Naive thymus-derived CD4-positive, alpha-beta T cell (primary cell): ENCODE measurements at regions of chr17 and their contacts with region 1.

Region 1: GRCh38 chr17:2336215-2336851 is at the start of gene TSR1:
- DNase-seq: peak; percentile 78 to 91 (median 89)
- ATAC-seq: peak; percentile 91
- H3K4me3 ChIP-seq: peak within 1 kb of the TSS; percentile 99
- H3K4me3 Mint-ChIP-seq: peak within 1 kb of the TSS; percentile 97 to 99 (median 98)
- H3K27ac ChIP-seq: peak within 1 kb of the TSS; percentile 92
- H3K27ac Mint-ChIP-seq: peak within 1 kb of the TSS; percentile 88 to 98 (median 95)
- H3K4me1 ChIP-seq: peaks cover 10 to 13% of the 10 kb centered on the region in 2 donors
- H3K4me1 Mint-ChIP-seq: peaks cover 8 to 35% (median 28%) of the 10 kb centered on the region in 7 donors
- H3K27me3 ChIP-seq: no peaks in the 10 kb centered on the region
- H3K27me3 Mint-ChIP-seq: no peaks in the 10 kb centered on the region
- total RNA-seq, gene TSR1: 22.9 to 42.8 (median 30.0) TPM

Region 2: DNA sequence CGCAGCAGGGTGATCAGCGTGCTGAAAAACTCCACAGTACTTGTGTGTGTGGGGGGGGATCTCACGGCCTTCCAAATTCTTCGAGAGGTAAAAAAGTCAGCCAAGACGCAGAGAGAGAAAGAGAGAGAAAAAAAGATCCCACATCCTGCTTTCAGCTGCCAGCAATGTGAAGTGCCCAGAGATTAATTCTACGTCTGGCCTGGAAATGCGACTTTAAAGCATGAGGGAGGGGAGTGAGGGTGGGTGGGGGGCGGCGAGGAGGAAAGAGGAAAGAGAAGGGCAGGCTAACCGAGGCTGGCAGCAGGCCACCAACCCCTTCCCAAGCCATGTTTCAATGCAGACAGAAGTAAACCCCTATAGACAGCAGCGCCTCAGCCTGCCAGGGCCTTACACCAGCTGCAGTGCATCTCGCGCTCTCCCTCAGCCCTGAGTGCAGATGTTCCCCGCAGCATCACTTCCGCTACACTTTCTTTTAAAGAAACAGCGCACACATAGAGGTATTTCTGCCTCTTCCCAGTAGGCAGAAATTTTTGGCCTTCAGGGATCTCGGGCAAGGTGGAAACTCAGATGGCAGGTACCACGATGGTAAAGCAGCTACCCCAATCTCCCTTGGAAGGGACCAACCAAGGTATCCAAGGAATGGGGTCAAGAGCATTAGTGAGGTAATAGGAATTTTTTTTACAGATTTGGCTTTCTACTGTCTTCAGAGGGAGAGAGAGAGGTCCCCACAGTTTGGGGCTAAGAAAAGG is 120.5 kb before region 1 on chr17:
- CTCF ChIA-PET with region 1: no interaction called
- POLR2A ChIA-PET with region 1: no interaction called
- intact Hi-C with region 1: loop called in 1 of 2 experiments (anchors 5 kb)
- DNase-seq: peak; percentile 43 to 81 (median 77)
- ATAC-seq: peak; percentile 98
- H3K4me3 ChIP-seq: peak overlapping the region; percentile 40
- H3K4me3 Mint-ChIP-seq: peak overlapping the region; percentile 74 to 89 (median 80)
- H3K27ac ChIP-seq: peak overlapping the region; percentile 89
- H3K27ac Mint-ChIP-seq: peak overlapping the region; percentile 94 to 98 (median 97)
- H3K4me1 ChIP-seq: peaks cover 34 to 53% of the 10 kb centered on the region in 2 donors
- H3K4me1 Mint-ChIP-seq: peaks cover 27 to 70% (median 64%) of the 10 kb centered on the region in 7 donors
- H3K27me3 ChIP-seq: no peaks in the 10 kb centered on the region
- H3K27me3 Mint-ChIP-seq: no peaks in the 10 kb centered on the region

Region 3: GRCh38 chr17:2238432-2239169 is 97.7 kb before region 1 on chr17:
- CTCF ChIA-PET with region 1: no interaction called
- POLR2A ChIA-PET with region 1: no interaction called
- intact Hi-C with region 1: no loop called
- DNase-seq: no peak
- ATAC-seq: no peak
- H3K4me3 ChIP-seq: no peak overlapping the region
- H3K4me3 Mint-ChIP-seq: peak overlapping the region in 1 of 10 donors; percentile 72
- H3K27ac ChIP-seq: no peak overlapping the region
- H3K27ac Mint-ChIP-seq: peak overlapping the region in 3 of 9 donors; percentile 8 to 79 (median 34)
- H3K4me1 ChIP-seq: no peaks in the 10 kb centered on the region
- H3K4me1 Mint-ChIP-seq: peaks cover 0 to 64% (median 12%) of the 10 kb centered on the region in 7 donors
- H3K27me3 ChIP-seq: no peaks in the 10 kb centered on the region
- H3K27me3 Mint-ChIP-seq: no peaks in the 10 kb centered on the region

Region 4: DNA sequence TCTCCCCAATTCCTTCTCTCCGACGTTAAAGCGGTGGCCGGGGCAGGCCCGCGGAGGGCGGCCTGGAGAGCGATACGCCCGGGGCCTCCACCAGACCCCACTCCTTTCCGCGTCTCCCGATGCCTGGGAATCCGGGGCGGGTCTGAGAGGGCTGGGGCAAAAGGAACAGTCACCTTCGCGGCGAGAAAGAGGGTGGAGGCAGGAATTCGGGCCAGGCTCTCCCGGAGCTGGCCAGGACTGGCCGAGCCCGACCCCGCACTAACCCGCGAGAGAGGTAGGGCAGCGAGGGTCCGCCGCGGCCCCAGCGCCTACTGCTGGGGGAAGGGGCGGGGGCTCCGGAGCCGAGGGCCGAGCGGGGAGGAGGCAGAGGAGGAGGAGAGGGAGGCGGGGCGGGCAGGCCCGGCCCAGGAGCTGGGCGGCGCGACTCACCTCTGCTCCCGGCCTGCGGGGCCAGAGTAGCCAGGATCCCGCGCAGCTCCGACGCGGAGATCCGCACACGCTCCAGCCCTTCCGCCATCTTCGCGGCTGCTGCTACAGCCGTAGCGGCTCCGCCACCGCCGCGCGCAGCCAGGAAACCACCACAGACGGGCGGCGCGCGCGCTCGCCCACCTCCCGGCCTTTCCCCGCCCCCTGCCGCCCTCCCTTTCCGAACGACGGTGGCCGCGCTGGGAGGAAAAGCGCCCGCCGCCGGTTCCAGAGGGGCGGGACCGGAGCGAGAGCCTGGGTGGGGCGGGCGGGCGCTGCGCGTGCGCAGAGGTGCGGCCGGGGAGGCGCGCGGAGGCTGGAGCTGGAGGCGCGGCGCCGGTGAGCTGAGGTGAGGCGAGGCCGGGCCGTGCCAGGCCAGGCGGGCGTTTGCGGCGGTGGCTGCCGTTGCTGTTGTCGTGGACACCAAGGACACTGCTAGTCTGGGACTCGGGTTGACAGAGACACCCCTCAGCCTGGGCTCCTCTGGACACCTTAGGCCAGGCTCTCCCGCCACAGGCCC is 32.8 kb before region 1 on chr17 and contains the starts of genes SMG6 and SRR:
- CTCF ChIA-PET with region 1: interaction called, 4 read pairs
- POLR2A ChIA-PET with region 1: interaction called, 21 read pairs
- intact Hi-C with region 1: loop called (anchors 1 kb)
- DNase-seq: peak; percentile 87 to 95 (median 93)
- ATAC-seq: peak; percentile 97
- H3K4me3 ChIP-seq: peak within 1 kb of the TSS; percentile 87
- H3K4me3 Mint-ChIP-seq: peak within 1 kb of the TSS; percentile 90 to 98 (median 92)
- H3K27ac ChIP-seq: peak within 1 kb of the TSS; percentile 98
- H3K27ac Mint-ChIP-seq: peak within 1 kb of the TSS; percentile 76 to 95 (median 84)
- H3K4me1 ChIP-seq: peaks cover 9 to 13% of the 10 kb centered on the region in 2 donors
- H3K4me1 Mint-ChIP-seq: peaks cover 25 to 61% (median 47%) of the 10 kb centered on the region in 7 donors
- H3K27me3 ChIP-seq: no peaks in the 10 kb centered on the region
- H3K27me3 Mint-ChIP-seq: no peaks in the 10 kb centered on the region
- total RNA-seq, gene SMG6: 45.6 to 65.3 (median 55.8) TPM
- total RNA-seq, gene SRR: 3.1 to 16.0 (median 8.3) TPM

Region 5: GRCh38 chr17:2361010-2361760 is 24.9 kb after region 1 on chr17:
- CTCF ChIA-PET with region 1: no interaction called
- POLR2A ChIA-PET with region 1: no interaction called
- intact Hi-C with region 1: no loop called
- DNase-seq: no peak
- ATAC-seq: no peak
- H3K4me3 ChIP-seq: no peak overlapping the region
- H3K4me3 Mint-ChIP-seq: no peak overlapping the region
- H3K27ac ChIP-seq: no peak overlapping the region
- H3K27ac Mint-ChIP-seq: peak overlapping the region in 2 of 9 donors; percentile 7 to 57
- H3K4me1 ChIP-seq: no peaks in the 10 kb centered on the region
- H3K4me1 Mint-ChIP-seq: peaks cover 0 to 11% (median 0%) of the 10 kb centered on the region in 7 donors
- H3K27me3 ChIP-seq: no peaks in the 10 kb centered on the region
- H3K27me3 Mint-ChIP-seq: no peaks in the 10 kb centered on the region

Region 6: GRCh38 chr17:2386400-2387085 is 50.2 kb after region 1 on chr17:
- CTCF ChIA-PET with region 1: interaction called, 6 read pairs
- POLR2A ChIA-PET with region 1: interaction called, 11 read pairs
- intact Hi-C with region 1: no loop called
- DNase-seq: peak in 1 of 9 donors; percentile 8
- ATAC-seq: no peak
- H3K4me3 ChIP-seq: no peak overlapping the region
- H3K4me3 Mint-ChIP-seq: no peak overlapping the region
- H3K27ac ChIP-seq: no peak overlapping the region
- H3K27ac Mint-ChIP-seq: peak overlapping the region in 1 of 9 donors; percentile 65
- H3K4me1 ChIP-seq: peaks cover 3 to 19% of the 10 kb centered on the region in 2 donors
- H3K4me1 Mint-ChIP-seq: peaks cover 13 to 35% (median 27%) of the 10 kb centered on the region in 7 donors
- H3K27me3 ChIP-seq: no peaks in the 10 kb centered on the region
- H3K27me3 Mint-ChIP-seq: no peaks in the 10 kb centered on the region

Region 7: GRCh38 chr17:2468270-2468669 is 131.9 kb after region 1 on chr17:
- CTCF ChIA-PET with region 1: no interaction called
- POLR2A ChIA-PET with region 1: no interaction called
- intact Hi-C with region 1: no loop called
- DNase-seq: no peak
- ATAC-seq: no peak
- H3K4me3 ChIP-seq: no peak overlapping the region
- H3K4me3 Mint-ChIP-seq: no peak overlapping the region
- H3K27ac ChIP-seq: no peak overlapping the region
- H3K27ac Mint-ChIP-seq: no peak overlapping the region
- H3K4me1 ChIP-seq: no peaks in the 10 kb centered on the region
- H3K4me1 Mint-ChIP-seq: peaks cover 0 to 2% (median 0%) of the 10 kb centered on the region in 7 donors
- H3K27me3 ChIP-seq: no peaks in the 10 kb centered on the region
- H3K27me3 Mint-ChIP-seq: no peaks in the 10 kb centered on the region

Region 8: GRCh38 chr17:4263282-4264215 is 1927.2 kb after region 1 on chr17 and contains the start of gene ANKFY1:
- CTCF ChIA-PET with region 1: no interaction called
- POLR2A ChIA-PET with region 1: no interaction called
- intact Hi-C with region 1: loop called in 1 of 2 experiments (anchors 5 kb)
- DNase-seq: peak; percentile 95 to 99 (median 97)
- ATAC-seq: peak; percentile 98
- H3K4me3 ChIP-seq: peak within 1 kb of the TSS; percentile 73
- H3K4me3 Mint-ChIP-seq: peak within 1 kb of the TSS; percentile 89 to 99 (median 94)
- H3K27ac ChIP-seq: peak within 1 kb of the TSS; percentile 94
- H3K27ac Mint-ChIP-seq: peak within 1 kb of the TSS; percentile 82 to 98 (median 95)
- H3K4me1 ChIP-seq: peaks cover 16 to 17% of the 10 kb centered on the region in 2 donors
- H3K4me1 Mint-ChIP-seq: peaks cover 27 to 49% (median 41%) of the 10 kb centered on the region in 7 donors
- H3K27me3 ChIP-seq: no peaks in the 10 kb centered on the region
- H3K27me3 Mint-ChIP-seq: no peaks in the 10 kb centered on the region
- total RNA-seq, gene ANKFY1: 52.4 to 84.5 (median 69.7) TPM